ENCODE measurements at regions of chr1 and their contacts with region 1.

Region 1: DNA sequence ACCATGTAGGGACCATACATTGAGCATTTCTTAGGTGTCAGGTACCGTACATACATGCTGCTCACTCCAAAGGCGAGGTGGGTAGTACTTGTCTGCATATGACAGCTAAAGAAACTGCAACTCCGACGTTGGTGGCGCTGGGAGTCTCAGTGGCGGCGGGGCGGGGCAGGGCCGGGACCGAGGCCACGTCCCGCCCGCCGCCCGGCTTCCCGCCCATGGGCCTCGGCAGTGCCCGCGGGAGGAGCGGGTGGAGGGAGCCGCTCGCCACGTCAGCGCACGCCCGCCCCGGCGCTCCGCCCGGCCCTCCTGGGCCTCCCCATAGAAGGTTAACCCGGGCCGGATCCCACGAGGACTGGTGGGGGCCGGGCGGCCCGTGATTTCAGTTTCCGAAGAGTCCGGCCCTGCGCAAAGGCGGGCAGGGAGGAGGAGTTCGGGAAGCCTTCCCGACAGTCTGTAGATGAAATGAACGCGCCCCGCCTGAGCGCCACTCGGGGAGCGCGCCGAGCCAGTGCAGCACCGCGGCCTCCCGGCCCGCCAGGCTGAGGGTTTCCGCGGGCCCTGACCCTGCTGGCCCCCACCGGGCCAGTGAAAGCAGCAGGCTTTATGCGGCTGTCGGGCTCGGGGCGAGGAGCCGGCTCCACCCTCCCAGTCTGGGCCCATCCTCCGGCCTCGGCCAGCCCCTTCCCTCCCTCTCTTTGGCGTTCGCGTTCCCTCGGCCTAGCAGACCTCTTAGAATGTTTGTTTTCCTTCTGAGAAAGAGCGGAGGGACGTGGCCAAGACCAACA is 119.9 kb upstream of the JUN start:
- DNase-seq: peak; percentile 94
- H3K4me3 Mint-ChIP-seq: peak overlapping the region; percentile 80
- H3K27ac Mint-ChIP-seq: peak overlapping the region; percentile 91
- H3K4me1 Mint-ChIP-seq: peaks cover 20% of the 10 kb centered on the region
- H3K27me3 Mint-ChIP-seq: no peaks in the 10 kb centered on the region

Region 2: DNA sequence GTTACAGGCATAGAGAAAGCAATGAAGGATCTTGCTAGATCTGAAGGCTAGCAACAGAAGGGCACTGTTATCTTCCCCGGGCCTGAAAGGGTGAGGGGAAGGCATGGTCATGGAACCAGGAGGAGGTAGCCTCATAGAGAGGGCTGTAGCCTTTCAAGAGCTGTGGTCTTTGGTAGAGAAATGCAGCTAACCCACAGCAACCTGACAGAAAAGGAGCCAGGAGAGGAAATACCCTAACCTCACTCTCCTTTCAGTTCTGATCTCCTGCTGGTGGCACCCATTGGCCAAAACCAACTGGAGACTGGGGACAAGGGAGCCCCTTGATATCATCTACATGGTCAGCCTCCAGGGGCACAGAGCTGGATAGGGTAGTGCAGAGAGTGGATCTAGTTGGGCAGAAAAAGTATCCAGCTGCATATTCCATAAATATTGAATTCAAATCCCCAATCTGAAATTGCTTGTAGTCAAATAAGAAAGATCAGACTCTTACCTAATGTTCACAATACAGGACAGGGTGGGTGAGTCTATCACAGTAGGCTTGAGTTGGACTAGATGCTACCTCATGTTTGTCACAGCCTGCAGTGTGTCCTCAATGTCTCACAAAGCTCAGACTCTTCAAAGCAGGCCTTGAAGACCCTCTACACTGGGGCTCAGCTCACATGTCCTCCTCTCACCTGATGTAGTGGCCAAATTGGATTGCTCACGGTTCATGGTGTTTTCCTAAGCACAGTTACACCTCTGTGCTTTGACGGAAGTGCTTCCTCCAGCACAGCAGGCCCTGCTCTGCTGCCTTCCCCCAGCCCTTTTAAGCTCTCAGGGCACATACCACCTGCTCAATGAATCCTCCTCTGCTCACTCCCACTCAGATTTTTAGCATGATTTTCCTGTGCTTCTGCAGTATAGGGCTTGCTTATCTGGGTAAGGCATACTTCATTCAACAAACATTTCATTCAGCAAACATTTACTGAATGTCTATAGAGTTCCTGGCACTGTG is 45.7 kb before region 1 on chr1:
- intact Hi-C with region 1: loop called (anchors 5 kb)
- DNase-seq: peak; percentile 81
- H3K4me3 Mint-ChIP-seq: peak overlapping the region; percentile 64
- H3K27ac Mint-ChIP-seq: peak overlapping the region; percentile 92
- H3K4me1 Mint-ChIP-seq: peaks cover 49% of the 10 kb centered on the region
- H3K27me3 Mint-ChIP-seq: peaks cover 2% of the 10 kb centered on the region

Region 3: GRCh38 chr1:58922302-58923089 is 18.8 kb after region 1 on chr1:
- intact Hi-C with region 1: no loop called
- DNase-seq: peak; percentile 87
- H3K4me3 Mint-ChIP-seq: peak overlapping the region; percentile 23
- H3K27ac Mint-ChIP-seq: peak overlapping the region; percentile 70
- H3K4me1 Mint-ChIP-seq: peaks cover 29% of the 10 kb centered on the region
- H3K27me3 Mint-ChIP-seq: peaks cover under 1% of the 10 kb centered on the region

Region 4: DNA sequence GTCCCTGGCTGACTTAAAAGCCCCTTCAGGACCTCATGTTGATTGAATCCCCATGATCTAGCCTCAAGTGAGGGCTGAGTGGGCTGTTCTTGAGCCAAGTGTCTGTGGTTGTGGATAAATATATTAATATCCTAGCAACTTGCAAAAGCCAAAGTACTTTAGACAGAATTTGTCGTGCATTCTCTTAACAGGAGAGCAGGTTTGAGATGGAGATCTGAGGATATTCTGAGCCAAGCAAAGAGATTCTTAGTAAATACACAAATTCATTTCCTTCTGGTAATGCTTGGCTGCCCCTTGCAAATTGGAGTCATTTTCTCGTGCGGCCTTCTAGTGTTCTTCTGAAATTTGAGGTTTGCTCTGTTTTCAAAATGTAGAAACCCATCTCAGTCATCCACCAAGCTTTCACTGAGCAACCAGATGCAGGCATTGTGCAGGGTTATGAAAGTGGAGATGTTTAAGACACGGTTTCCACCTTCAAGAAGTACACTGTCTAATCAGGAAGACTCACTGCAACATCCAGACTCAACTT is 122.3 kb after region 1 on chr1:
- intact Hi-C with region 1: loop called (anchors 2 kb)
- DNase-seq: no peak
- H3K4me3 Mint-ChIP-seq: peak overlapping the region; percentile 75
- H3K27ac Mint-ChIP-seq: no peak overlapping the region
- H3K4me1 Mint-ChIP-seq: peaks cover 35% of the 10 kb centered on the region
- H3K27me3 Mint-ChIP-seq: no peaks in the 10 kb centered on the region

Region 5: GRCh38 chr1:59046730-59047157 is 143.0 kb after region 1 on chr1:
- intact Hi-C with region 1: loop called (anchors 1 kb)
- DNase-seq: peak; percentile 89
- H3K4me3 Mint-ChIP-seq: peak overlapping the region; percentile 76
- H3K27ac Mint-ChIP-seq: peak overlapping the region; percentile 96
- H3K4me1 Mint-ChIP-seq: peaks cover 60% of the 10 kb centered on the region
- H3K27me3 Mint-ChIP-seq: no peaks in the 10 kb centered on the region

Region 6: DNA sequence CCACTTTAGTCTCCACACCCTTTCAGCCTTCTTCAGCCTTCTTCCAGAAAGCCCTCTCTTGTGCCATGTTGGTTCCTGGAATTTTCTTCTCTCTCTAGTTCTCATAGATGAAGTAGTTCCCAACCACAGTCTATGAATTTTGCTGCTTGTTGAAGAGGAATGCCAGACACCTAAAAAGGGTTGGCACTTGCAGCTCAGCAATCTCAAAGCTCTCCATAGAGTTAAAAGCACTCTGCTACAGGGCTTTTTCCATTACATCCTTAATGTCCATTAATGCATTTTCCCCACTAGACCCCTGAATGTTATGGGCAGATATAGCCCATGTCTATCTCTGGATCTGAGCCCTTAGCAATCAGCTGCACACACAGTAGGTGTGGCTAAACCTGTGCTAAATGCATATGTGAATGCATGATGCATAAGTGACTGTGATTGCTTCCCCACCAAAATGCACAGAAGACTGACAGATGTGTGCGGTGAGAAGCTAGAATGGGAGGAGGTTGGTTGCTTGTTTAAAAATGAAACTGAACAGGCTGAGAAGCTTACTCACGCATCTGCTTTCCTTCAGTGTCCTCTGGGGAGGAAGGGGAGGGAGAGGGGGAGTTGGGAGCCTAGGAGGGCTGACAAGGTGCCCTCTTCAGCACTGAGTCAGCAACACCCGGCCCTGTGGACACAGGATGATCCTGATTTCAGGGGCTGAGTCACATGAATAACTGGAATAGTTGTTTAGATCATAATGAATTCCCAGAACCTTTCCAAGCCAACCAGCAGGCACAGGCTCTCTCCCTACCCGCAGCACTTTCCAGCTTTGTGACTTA is 247.1 kb after region 1 on chr1:
- intact Hi-C with region 1: loop called (anchors 5 kb)
- DNase-seq: peak; percentile 81
- H3K4me3 Mint-ChIP-seq: peak overlapping the region; percentile 35
- H3K27ac Mint-ChIP-seq: peak overlapping the region; percentile 51
- H3K4me1 Mint-ChIP-seq: peaks cover 33% of the 10 kb centered on the region
- H3K27me3 Mint-ChIP-seq: no peaks in the 10 kb centered on the region

Region 7: DNA sequence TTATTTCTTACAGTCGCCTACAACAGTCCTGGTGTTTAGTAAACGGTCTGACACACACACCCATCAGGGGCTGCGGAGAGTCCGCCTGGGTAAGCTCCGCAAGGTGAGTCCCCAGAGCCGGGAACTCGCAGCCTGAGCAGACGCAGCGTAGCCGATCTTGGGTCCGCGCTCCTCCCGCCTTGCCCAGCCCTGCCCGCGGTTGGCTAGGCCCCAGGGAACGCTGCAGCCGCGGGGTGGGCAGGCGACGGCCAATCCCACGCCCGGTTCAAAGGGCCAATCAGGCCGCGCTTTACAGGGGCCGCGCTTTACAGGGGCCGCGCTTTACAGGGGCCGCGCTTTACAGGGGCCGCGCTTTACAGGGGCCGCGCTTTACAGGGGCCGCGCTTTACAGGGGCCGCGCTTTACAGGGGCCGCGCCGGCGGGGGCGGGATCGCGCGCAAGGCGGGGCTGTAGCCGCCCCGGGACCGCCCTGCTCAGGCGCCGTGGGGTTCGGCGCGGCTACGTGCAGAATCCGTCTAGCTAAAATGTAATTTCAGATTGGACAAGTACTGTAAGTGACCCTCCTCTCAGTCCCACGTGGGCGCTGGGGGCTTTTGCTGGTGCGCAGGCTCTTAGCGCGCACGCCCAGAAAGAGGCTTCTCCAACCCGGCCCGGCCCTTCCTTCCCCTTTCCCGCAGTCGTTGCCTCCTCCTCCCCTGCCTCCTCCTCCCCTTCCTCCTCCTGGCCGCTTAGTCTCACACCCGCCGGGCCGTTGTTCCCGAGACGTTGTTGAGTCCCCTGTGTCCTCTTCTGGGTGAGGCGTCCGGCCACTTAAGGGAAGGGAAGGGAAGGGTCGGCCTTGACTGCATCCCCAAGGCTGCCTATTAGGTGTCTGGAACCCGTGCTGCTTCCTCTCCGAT is 392.9 kb after region 1 on chr1 and contains the start of gene FGGY:
- intact Hi-C with region 1: loop called (anchors 2 kb)
- DNase-seq: peak; percentile 96
- H3K4me3 Mint-ChIP-seq: peak within 1 kb of the TSS; percentile 85
- H3K27ac Mint-ChIP-seq: peak within 1 kb of the TSS; percentile 91
- H3K4me1 Mint-ChIP-seq: peaks cover 36% of the 10 kb centered on the region
- H3K27me3 Mint-ChIP-seq: no peaks in the 10 kb centered on the region
- total RNA-seq, gene FGGY: 6.2 and 8.1 TPM in 2 replicates

Region 8: GRCh38 chr1:59699227-59699847 is 795.6 kb after region 1 on chr1:
- intact Hi-C with region 1: loop called (anchors 5 kb)
- DNase-seq: peak; percentile 80
- H3K4me3 Mint-ChIP-seq: no peak overlapping the region
- H3K27ac Mint-ChIP-seq: no peak overlapping the region
- H3K4me1 Mint-ChIP-seq: peaks cover 26% of the 10 kb centered on the region
- H3K27me3 Mint-ChIP-seq: peaks cover 2% of the 10 kb centered on the region

Measured in activated CD4-positive, alpha-beta T cell treated with anti-CD3 and anti-CD28 coated beads, Interleukin-2, amount 10 ng/mL, durations not matched to agents 24 days and 14 days (primary cell).